ENCODE measurements at regions of chrX and their contacts with region 1.

Region 1: DNA sequence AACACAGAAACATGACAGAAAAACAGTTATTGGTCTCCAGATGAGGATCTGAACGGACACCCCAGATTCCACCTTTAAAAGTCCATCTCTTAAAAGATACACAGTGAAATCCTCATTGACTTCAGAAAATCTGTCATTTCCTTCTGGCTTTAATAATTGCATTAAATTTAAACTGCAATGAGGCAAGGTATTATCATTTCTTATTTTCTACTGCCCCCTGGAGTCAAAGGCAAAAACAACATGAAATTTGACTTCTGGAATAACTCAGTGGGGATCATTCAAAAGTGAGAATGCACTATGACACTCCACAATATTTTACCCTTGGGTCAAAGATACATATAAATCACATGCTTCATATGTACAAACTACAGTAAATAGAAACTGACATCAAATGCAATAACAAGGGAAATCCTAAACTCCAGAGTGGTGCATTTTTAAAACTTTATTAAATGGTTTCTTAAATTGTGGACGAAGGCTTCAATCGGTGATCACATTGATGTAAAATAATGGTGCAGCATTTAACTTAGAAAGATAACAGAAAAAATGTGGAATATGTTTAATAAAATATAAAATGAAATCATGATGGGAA is 56.4 kb upstream of the SPANXN1 start:
- DNase-seq: no peak
- H3K4me3 Mint-ChIP-seq: no peak overlapping the region
- H3K27ac Mint-ChIP-seq: no peak overlapping the region
- H3K4me1 Mint-ChIP-seq: no peaks in the 10 kb centered on the region
- H3K27me3 Mint-ChIP-seq: no peaks in the 10 kb centered on the region
- CTCF ChIP-seq: no peak

Region 2: GRCh38 chrX:143664302-143664701 is 1526.6 kb before region 1 on chrX:
- CTCF ChIA-PET with region 1: no interaction called
- intact Hi-C with region 1: loop called (anchors 1 kb)
- DNase-seq: no peak
- H3K4me3 Mint-ChIP-seq: no peak overlapping the region
- H3K27ac Mint-ChIP-seq: no peak overlapping the region
- H3K4me1 Mint-ChIP-seq: no peaks in the 10 kb centered on the region
- H3K27me3 Mint-ChIP-seq: no peaks in the 10 kb centered on the region
- CTCF ChIP-seq: no peak

Region 3: DNA sequence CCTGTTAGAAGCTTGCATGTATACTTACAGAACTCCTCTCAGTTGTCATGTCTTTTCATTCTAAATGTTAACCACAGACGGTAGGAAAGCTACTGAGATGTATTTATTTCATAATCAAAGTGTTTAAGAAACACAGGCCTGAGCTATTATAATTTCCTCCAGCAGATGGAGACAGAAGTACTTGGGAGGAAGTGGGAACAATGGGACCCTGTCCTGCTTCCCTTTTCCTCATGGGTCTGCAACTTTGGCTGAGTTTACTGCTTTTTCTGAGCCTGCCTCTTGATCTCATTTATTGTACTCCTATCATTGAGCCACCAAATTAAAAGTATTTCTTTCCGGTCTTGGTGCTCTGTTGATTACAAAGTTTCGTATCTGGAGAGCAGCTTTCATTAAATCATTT is 1402.6 kb before region 1 on chrX:
- CTCF ChIA-PET with region 1: no interaction called
- intact Hi-C with region 1: loop called (anchors 10 kb)
- DNase-seq: no peak
- H3K4me3 Mint-ChIP-seq: no peak overlapping the region
- H3K27ac Mint-ChIP-seq: no peak overlapping the region
- H3K4me1 Mint-ChIP-seq: no peaks in the 10 kb centered on the region
- H3K27me3 Mint-ChIP-seq: no peaks in the 10 kb centered on the region
- CTCF ChIP-seq: no peak

Region 4: GRCh38 chrX:145002771-145003170 is 188.1 kb before region 1 on chrX:
- CTCF ChIA-PET with region 1: no interaction called
- intact Hi-C with region 1: no loop called
- DNase-seq: no peak
- H3K4me3 Mint-ChIP-seq: no peak overlapping the region
- H3K27ac Mint-ChIP-seq: no peak overlapping the region
- H3K4me1 Mint-ChIP-seq: no peaks in the 10 kb centered on the region
- H3K27me3 Mint-ChIP-seq: no peaks in the 10 kb centered on the region
- CTCF ChIP-seq: no peak